ENCODE measurements at regions of chrX and their contacts with region 1.

Region 1: GRCh38 chrX:41275661-41276609 is 58.0 kb upstream of the DDX3X start:
- DNase-seq: peak; percentile 67
- H3K4me3 ChIP-seq: peak overlapping the region; percentile 37
- H3K27ac ChIP-seq: no peak overlapping the region
- H3K4me1 ChIP-seq: no peaks in the 10 kb centered on the region
- H3K27me3 ChIP-seq: peaks cover 5% of the 10 kb centered on the region
- CTCF ChIP-seq: no peak

Region 2: DNA sequence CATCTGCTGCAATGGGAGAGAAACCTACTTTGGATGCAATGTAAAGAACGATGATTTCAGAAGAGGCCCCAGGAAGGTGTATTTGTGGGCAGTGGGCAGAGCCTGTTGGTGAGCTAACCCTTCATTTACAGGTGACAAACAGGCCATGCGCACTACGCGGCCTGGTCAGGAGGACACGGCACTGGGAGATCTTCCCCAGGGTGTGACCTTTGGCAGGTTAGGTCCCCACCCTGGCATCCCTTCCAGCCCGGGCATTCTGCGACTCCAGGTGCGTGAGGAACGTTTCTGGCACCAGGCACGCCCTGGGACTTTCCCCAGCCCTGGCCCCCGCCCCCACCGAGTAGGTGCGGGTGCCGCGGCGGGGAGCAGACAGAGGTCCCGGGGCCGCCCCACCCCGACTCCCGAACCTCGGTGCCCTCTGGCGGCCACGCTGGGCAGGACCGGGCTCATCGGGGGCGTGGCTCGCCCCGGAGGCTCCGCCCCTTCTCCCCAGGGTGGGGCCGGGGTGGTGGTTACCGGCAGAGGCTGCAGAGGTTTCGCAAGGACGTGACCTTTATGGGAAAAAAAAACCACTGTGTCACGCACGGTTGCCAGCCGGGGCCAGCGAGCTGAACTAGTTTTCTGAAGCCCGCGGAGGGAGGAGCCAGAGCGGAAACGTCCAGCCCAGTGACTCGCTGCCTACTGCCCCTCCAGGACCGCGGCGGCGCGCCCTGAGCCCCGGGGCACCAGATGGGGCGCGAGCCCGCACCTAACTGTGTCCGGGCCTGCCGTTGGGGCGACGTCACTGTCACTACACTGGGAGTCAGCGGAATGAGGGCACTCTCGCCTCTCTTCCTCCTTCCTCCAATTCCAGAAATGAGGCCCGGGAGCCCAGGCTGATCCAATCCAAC is 166.2 kb after region 1 on chrX:
- intact Hi-C with region 1: loop called (anchors 10 kb)
- DNase-seq: peak; percentile 86
- H3K4me3 ChIP-seq: peak overlapping the region; percentile 12
- H3K27ac ChIP-seq: peak overlapping the region; percentile 57
- H3K4me1 ChIP-seq: no peaks in the 10 kb centered on the region
- H3K27me3 ChIP-seq: no peaks in the 10 kb centered on the region
- CTCF ChIP-seq: peak; percentile 58

Measured in colonic mucosa (tissue), 4 donors.